HCT116 (cell line): ENCODE measurements at regions of chr9 and their contacts with region 1.

Region 1: GRCh38 chr9:76018235-76018634 is 127.8 kb downstream of the PCSK5 start:
- DNase-seq: no peak
- ATAC-seq: no peak
- H3K4me3 ChIP-seq: no peak overlapping the region
- H3K27ac ChIP-seq: no peak overlapping the region
- H3K4me1 ChIP-seq: peaks cover 0 to 3% of the 10 kb centered on the region in 2 experiments; a peak in 1 of 4 replicates
- H3K27me3 ChIP-seq: no peaks in the 10 kb centered on the region
- CTCF ChIP-seq: no peak
- POLR2A ChIP-seq: no peak
- RAD21 ChIP-seq: no peak

Region 2: GRCh38 chr9:75967556-75967955 is 50.7 kb before region 1 on chr9:
- CTCF ChIA-PET with region 1: no interaction called
- POLR2A ChIA-PET with region 1: no interaction called
- RAD21 ChIA-PET with region 1: no interaction called
- intact Hi-C with region 1: loop called (anchors 5 kb)
- DNase-seq: no peak
- ATAC-seq: no peak
- H3K4me3 ChIP-seq: no peak overlapping the region
- H3K27ac ChIP-seq: no peak overlapping the region
- H3K4me1 ChIP-seq: peaks cover 7 to 14% of the 10 kb centered on the region in 2 experiments; a peak in 3 of 4 replicates
- H3K27me3 ChIP-seq: no peaks in the 10 kb centered on the region
- CTCF ChIP-seq: no peak
- POLR2A ChIP-seq: no peak
- RAD21 ChIP-seq: no peak

Region 3: GRCh38 chr9:76662476-76663281 is 644.4 kb after region 1 on chr9:
- CTCF ChIA-PET with region 1: no interaction called
- POLR2A ChIA-PET with region 1: no interaction called
- RAD21 ChIA-PET with region 1: no interaction called
- intact Hi-C with region 1: no loop called
- DNase-seq: no peak
- ATAC-seq: no peak
- H3K4me3 ChIP-seq: no peak overlapping the region
- H3K27ac ChIP-seq: no peak overlapping the region
- H3K4me1 ChIP-seq: no peaks in the 10 kb centered on the region
- H3K27me3 ChIP-seq: peaks cover 18% of the 10 kb centered on the region; the same call in 1 of the 2 replicates
- CTCF ChIP-seq: no peak
- POLR2A ChIP-seq: no peak
- RAD21 ChIP-seq: no peak